ENCODE measurements at regions of chr9 and their contacts with region 1.

Region 1: GRCh38 chr9:21549251-21549765 is 67.2 kb upstream of the IFNE start:
- DNase-seq: peak; percentile 97
- ATAC-seq: peak; percentile 80
- H3K4me3 ChIP-seq: peak overlapping the region; percentile 39; the same call in 1 of the 2 replicates
- H3K27ac ChIP-seq: peak overlapping the region; percentile 67
- H3K4me1 ChIP-seq: peaks cover 22% of the 10 kb centered on the region
- H3K27me3 ChIP-seq: no peaks in the 10 kb centered on the region
- CTCF ChIP-seq: no peak
- POLR2A ChIP-seq: no peak
- RAD21 ChIP-seq: no peak

Region 2: GRCh38 chr9:21060919-21061561 is 488.3 kb before region 1 on chr9:
- CTCF ChIA-PET with region 1: no interaction called
- POLR2A ChIA-PET with region 1: no interaction called
- dilution Hi-C with region 1: no loop called
- in situ Hi-C with region 1: no loop called
- intact Hi-C with region 1: no loop called
- DNase-seq: peak; percentile 36
- ATAC-seq: no peak; the same call in 1 of the 2 replicates
- H3K4me3 ChIP-seq: no peak overlapping the region
- H3K27ac ChIP-seq: no peak overlapping the region
- H3K4me1 ChIP-seq: no peaks in the 10 kb centered on the region
- H3K27me3 ChIP-seq: no peaks in the 10 kb centered on the region
- CTCF ChIP-seq: no peak
- POLR2A ChIP-seq: no peak
- RAD21 ChIP-seq: no peak

Region 3: DNA sequence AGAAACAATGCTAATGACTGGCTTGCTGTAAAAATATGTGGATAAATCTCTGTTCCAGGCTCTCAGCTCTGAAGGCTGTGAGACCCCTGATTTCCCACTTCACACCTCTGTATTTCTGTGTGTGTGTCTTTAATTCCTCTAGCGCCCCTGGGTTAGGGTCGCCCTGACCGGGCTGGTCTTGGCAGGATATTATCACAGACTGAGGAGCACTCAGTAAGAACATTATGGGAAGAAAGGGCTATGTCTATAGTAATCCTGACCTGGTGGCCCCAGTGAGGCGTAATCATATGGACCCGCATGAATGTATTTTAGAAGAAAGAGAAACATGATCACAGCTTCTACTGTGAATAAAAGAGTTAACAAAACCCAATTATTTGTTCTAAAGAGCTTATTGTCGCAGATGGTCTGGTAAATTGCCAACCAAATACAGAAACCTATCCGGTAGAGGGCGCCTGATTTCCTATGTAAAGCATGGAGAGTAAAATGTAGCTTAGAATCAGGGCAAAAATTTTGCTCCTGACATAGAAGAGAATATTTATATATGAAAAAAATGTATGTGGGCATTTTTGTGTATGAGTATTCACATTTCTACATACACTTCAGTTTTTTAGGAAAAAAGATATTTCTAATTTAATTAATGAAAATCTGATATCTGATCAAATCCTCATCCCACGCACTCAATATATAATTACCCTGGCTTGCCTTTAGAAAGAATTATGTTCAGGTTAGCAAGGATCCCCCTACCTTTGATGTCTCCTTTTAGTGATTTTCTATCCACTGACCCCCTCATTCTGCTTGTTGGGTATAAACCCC is 114.9 kb before region 1 on chr9:
- CTCF ChIA-PET with region 1: no interaction called
- POLR2A ChIA-PET with region 1: no interaction called
- dilution Hi-C with region 1: no loop called
- in situ Hi-C with region 1: no loop called
- intact Hi-C with region 1: loop called (anchors 1 kb)
- DNase-seq: peak; percentile 73
- ATAC-seq: peak; percentile 48; the same call in 1 of the 2 replicates
- H3K4me3 ChIP-seq: no peak overlapping the region
- H3K27ac ChIP-seq: no peak overlapping the region
- H3K4me1 ChIP-seq: no peaks in the 10 kb centered on the region
- H3K27me3 ChIP-seq: peaks cover 8% of the 10 kb centered on the region
- CTCF ChIP-seq: peak; percentile 72
- POLR2A ChIP-seq: no peak
- RAD21 ChIP-seq: peak; percentile 55

Region 4: GRCh38 chr9:21591221-21592062 is 42.1 kb after region 1 on chr9:
- CTCF ChIA-PET with region 1: no interaction called
- POLR2A ChIA-PET with region 1: no interaction called
- dilution Hi-C with region 1: no loop called
- in situ Hi-C with region 1: no loop called
- intact Hi-C with region 1: no loop called
- DNase-seq: peak; percentile 99
- ATAC-seq: peak; percentile 97
- H3K4me3 ChIP-seq: no peak overlapping the region
- H3K27ac ChIP-seq: peak overlapping the region; percentile 77
- H3K4me1 ChIP-seq: peaks cover 2% of the 10 kb centered on the region; the same call in 1 of the 2 replicates
- H3K27me3 ChIP-seq: no peaks in the 10 kb centered on the region
- CTCF ChIP-seq: no peak
- POLR2A ChIP-seq: peak; percentile 77; the same call in 1 of the 2 replicates
- RAD21 ChIP-seq: no peak; the same call in 1 of the 2 replicates

Region 5: GRCh38 chr9:21777701-21778100 is 228.4 kb after region 1 on chr9:
- CTCF ChIA-PET with region 1: no interaction called
- POLR2A ChIA-PET with region 1: no interaction called
- dilution Hi-C with region 1: loop called (anchors 25 kb)
- in situ Hi-C with region 1: no loop called
- intact Hi-C with region 1: loop called (anchors 2 kb)
- DNase-seq: peak; percentile 93
- ATAC-seq: peak; percentile 91
- H3K4me3 ChIP-seq: no peak overlapping the region
- H3K27ac ChIP-seq: peak overlapping the region; percentile 99
- H3K4me1 ChIP-seq: peaks cover 8% of the 10 kb centered on the region
- H3K27me3 ChIP-seq: no peaks in the 10 kb centered on the region
- CTCF ChIP-seq: no peak
- POLR2A ChIP-seq: no peak
- RAD21 ChIP-seq: no peak

Region 6: GRCh38 chr9:21904776-21905175 is 355.5 kb after region 1 on chr9:
- CTCF ChIA-PET with region 1: no interaction called
- POLR2A ChIA-PET with region 1: no interaction called
- dilution Hi-C with region 1: no loop called
- in situ Hi-C with region 1: no loop called
- intact Hi-C with region 1: no loop called
- DNase-seq: no peak
- ATAC-seq: no peak; the same call in 1 of the 2 replicates
- H3K4me3 ChIP-seq: no peak overlapping the region
- H3K27ac ChIP-seq: no peak overlapping the region
- H3K4me1 ChIP-seq: peaks cover 1% of the 10 kb centered on the region; the same call in 1 of the 2 replicates
- H3K27me3 ChIP-seq: no peaks in the 10 kb centered on the region
- CTCF ChIP-seq: no peak
- POLR2A ChIP-seq: no peak
- RAD21 ChIP-seq: no peak

Region 7: GRCh38 chr9:22169727-22170503 is 620.6 kb after region 1 on chr9:
- CTCF ChIA-PET with region 1: no interaction called
- POLR2A ChIA-PET with region 1: no interaction called
- dilution Hi-C with region 1: no loop called
- in situ Hi-C with region 1: no loop called
- intact Hi-C with region 1: no loop called
- DNase-seq: peak; percentile 89
- ATAC-seq: peak; percentile 85
- H3K4me3 ChIP-seq: no peak overlapping the region
- H3K27ac ChIP-seq: 0 out of 2 replicates have a peak overlapping the region, but pooled peaks have one; percentile 57
- H3K4me1 ChIP-seq: peaks cover 9% of the 10 kb centered on the region
- H3K27me3 ChIP-seq: no peaks in the 10 kb centered on the region
- CTCF ChIP-seq: no peak
- POLR2A ChIP-seq: no peak
- RAD21 ChIP-seq: no peak